PC-9 (cell line): ENCODE measurements at regions of chr16 and their contacts with region 1.

Region 1: GRCh38 chr16:12803203-12804097 is at the start of gene CPPED1:
- DNase-seq: peak; percentile 83 to 94
- H3K4me3 ChIP-seq: peak within 1 kb of the TSS; percentile 97
- H3K27ac ChIP-seq: peak within 1 kb of the TSS; percentile 99
- H3K4me1 ChIP-seq: peaks cover 39% of the 10 kb centered on the region
- H3K27me3 ChIP-seq: no peaks in the 10 kb centered on the region
- CTCF ChIP-seq: no peak
- total RNA-seq, gene CPPED1: 52.8 and 66.9 TPM in 2 replicates

Region 2: GRCh38 chr16:12573730-12574383 is 229.6 kb before region 1 on chr16:
- CTCF ChIA-PET with region 1: interaction called, 12 read pairs
- POLR2A ChIA-PET with region 1: no interaction called
- intact Hi-C with region 1: loop called (anchors 1 kb)
- DNase-seq: peak in 1 of 2 experiments; percentile 87
- H3K4me3 ChIP-seq: no peak overlapping the region
- H3K27ac ChIP-seq: peak overlapping the region; percentile 34
- H3K4me1 ChIP-seq: peaks cover 8% of the 10 kb centered on the region
- H3K27me3 ChIP-seq: no peaks in the 10 kb centered on the region
- CTCF ChIP-seq: peak; percentile 88

Region 3: GRCh38 chr16:12833957-12834356 is 30.5 kb after region 1 on chr16:
- CTCF ChIA-PET with region 1: no interaction called
- POLR2A ChIA-PET with region 1: no interaction called
- intact Hi-C with region 1: loop called (anchors 1 kb)
- DNase-seq: peak; percentile 92 to 95
- H3K4me3 ChIP-seq: peak overlapping the region; percentile 19; the same call in 1 of the 2 replicates
- H3K27ac ChIP-seq: peak overlapping the region; percentile 93
- H3K4me1 ChIP-seq: peaks cover 27% of the 10 kb centered on the region
- H3K27me3 ChIP-seq: no peaks in the 10 kb centered on the region
- CTCF ChIP-seq: no peak

Region 4: GRCh38 chr16:12901597-12902461 is 98.4 kb after region 1 on chr16 and contains the start of gene SHISA9:
- CTCF ChIA-PET with region 1: no interaction called
- POLR2A ChIA-PET with region 1: interaction called, 27 read pairs
- intact Hi-C with region 1: loop called (anchors 1 kb)
- DNase-seq: no peak
- H3K4me3 ChIP-seq: peak within 1 kb of the TSS; percentile 94
- H3K27ac ChIP-seq: peak within 1 kb of the TSS; percentile 99
- H3K4me1 ChIP-seq: peaks cover 50% of the 10 kb centered on the region
- H3K27me3 ChIP-seq: no peaks in the 10 kb centered on the region
- CTCF ChIP-seq: no peak
- total RNA-seq, gene SHISA9: 64.5 and 80.5 TPM in 2 replicates

Region 5: GRCh38 chr16:13110124-13110796 is 306.8 kb after region 1 on chr16:
- CTCF ChIA-PET with region 1: no interaction called
- POLR2A ChIA-PET with region 1: no interaction called
- intact Hi-C with region 1: loop called (anchors 1 kb)
- DNase-seq: peak; percentile 88 to 99
- H3K4me3 ChIP-seq: peak overlapping the region; percentile 47; the same call in 1 of the 2 replicates
- H3K27ac ChIP-seq: peak overlapping the region; percentile 97
- H3K4me1 ChIP-seq: peaks cover 60% of the 10 kb centered on the region
- H3K27me3 ChIP-seq: no peaks in the 10 kb centered on the region
- CTCF ChIP-seq: no peak

Region 6: GRCh38 chr16:13307255-13307654 is 503.8 kb after region 1 on chr16:
- CTCF ChIA-PET with region 1: no interaction called
- POLR2A ChIA-PET with region 1: no interaction called
- intact Hi-C with region 1: loop called (anchors 1 kb)
- DNase-seq: peak; percentile 86 to 99
- H3K4me3 ChIP-seq: no peak overlapping the region
- H3K27ac ChIP-seq: peak overlapping the region; percentile 88
- H3K4me1 ChIP-seq: peaks cover 44% of the 10 kb centered on the region
- H3K27me3 ChIP-seq: no peaks in the 10 kb centered on the region
- CTCF ChIP-seq: no peak

Region 7: GRCh38 chr16:13453938-13454553 is 650.6 kb after region 1 on chr16:
- CTCF ChIA-PET with region 1: no interaction called
- POLR2A ChIA-PET with region 1: no interaction called
- intact Hi-C with region 1: loop called (anchors 5 kb)
- DNase-seq: peak in 1 of 2 experiments; percentile 56
- H3K4me3 ChIP-seq: no peak overlapping the region
- H3K27ac ChIP-seq: no peak overlapping the region
- H3K4me1 ChIP-seq: no peaks in the 10 kb centered on the region
- H3K27me3 ChIP-seq: no peaks in the 10 kb centered on the region
- CTCF ChIP-seq: peak; percentile 90